ENCODE measurements at regions of chr17 and their contacts with region 1.

Region 1: GRCh38 chr17:7862692-7863437 is 5.1 kb downstream of the CYB5D1 start:
- DNase-seq: peak; percentile 60
- ATAC-seq: no peak
- H3K4me3 ChIP-seq: no peak overlapping the region
- H3K27ac ChIP-seq: no peak overlapping the region
- H3K4me1 ChIP-seq: peaks cover 11% of the 10 kb centered on the region; the same call in 1 of the 2 replicates
- H3K27me3 ChIP-seq: no peaks in the 10 kb centered on the region
- CTCF ChIP-seq: peak; percentile 68

Region 2: GRCh38 chr17:7056386-7056785 is 806.5 kb before region 1 on chr17:
- CTCF ChIA-PET with region 1: no interaction called
- POLR2A ChIA-PET with region 1: no interaction called
- intact Hi-C with region 1: no loop called
- DNase-seq: peak; percentile 46
- ATAC-seq: no peak
- H3K4me3 ChIP-seq: no peak overlapping the region
- H3K27ac ChIP-seq: no peak overlapping the region
- H3K4me1 ChIP-seq: peaks cover 27% of the 10 kb centered on the region
- H3K27me3 ChIP-seq: no peaks in the 10 kb centered on the region
- CTCF ChIP-seq: no peak

Region 3: GRCh38 chr17:7834962-7835813 is 27.7 kb before region 1 on chr17:
- CTCF ChIA-PET with region 1: no interaction called
- POLR2A ChIA-PET with region 1: no interaction called
- intact Hi-C with region 1: no loop called
- DNase-seq: peak; percentile 97
- ATAC-seq: peak; percentile 56
- H3K4me3 ChIP-seq: peak overlapping the region; percentile 83
- H3K27ac ChIP-seq: peak overlapping the region; percentile 75
- H3K4me1 ChIP-seq: peaks cover 27% of the 10 kb centered on the region
- H3K27me3 ChIP-seq: no peaks in the 10 kb centered on the region
- CTCF ChIP-seq: peak; percentile 71

Region 4: DNA sequence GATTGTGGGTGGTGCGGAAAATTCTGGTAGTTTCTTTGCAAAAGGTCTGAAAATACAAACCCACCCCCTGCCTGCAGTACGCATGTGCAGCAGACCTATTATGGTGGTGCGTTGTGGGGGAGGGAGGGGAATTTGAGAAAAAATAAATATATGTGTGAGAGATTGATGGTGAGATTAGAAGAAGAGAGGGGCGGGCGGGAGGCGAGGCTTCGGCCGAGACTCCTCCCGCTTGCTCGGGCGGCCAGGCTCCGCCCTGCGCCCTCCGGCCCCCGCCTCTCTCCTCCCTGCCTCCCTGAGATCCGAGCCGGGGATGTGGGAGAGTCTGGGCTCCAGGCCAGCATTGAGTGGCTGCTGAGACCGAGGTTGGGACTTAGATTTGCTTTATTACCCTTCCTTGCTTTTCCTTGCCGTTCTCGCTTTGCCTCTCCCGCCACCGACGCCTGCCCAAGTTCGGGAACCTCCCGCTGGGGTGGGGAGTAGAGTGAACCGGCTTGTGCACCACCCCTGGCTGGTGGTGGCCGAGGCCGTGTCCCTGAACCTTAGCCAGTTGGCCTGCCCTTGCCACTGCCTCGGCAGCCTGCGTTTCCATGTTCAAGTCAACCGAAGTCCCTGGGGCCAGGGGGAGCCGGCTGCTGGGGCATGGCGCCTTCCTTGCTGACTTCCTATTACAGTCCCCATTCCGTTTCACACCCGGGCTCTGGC is 24.8 kb after region 1 on chr17:
- CTCF ChIA-PET with region 1: no interaction called
- POLR2A ChIA-PET with region 1: no interaction called
- intact Hi-C with region 1: loop called (anchors 2 kb)
- DNase-seq: peak; percentile 93
- ATAC-seq: peak; percentile 75
- H3K4me3 ChIP-seq: peak overlapping the region; percentile 94
- H3K27ac ChIP-seq: peak overlapping the region; percentile 96
- H3K4me1 ChIP-seq: peaks cover 29% of the 10 kb centered on the region
- H3K27me3 ChIP-seq: no peaks in the 10 kb centered on the region
- CTCF ChIP-seq: no peak

Region 5: DNA sequence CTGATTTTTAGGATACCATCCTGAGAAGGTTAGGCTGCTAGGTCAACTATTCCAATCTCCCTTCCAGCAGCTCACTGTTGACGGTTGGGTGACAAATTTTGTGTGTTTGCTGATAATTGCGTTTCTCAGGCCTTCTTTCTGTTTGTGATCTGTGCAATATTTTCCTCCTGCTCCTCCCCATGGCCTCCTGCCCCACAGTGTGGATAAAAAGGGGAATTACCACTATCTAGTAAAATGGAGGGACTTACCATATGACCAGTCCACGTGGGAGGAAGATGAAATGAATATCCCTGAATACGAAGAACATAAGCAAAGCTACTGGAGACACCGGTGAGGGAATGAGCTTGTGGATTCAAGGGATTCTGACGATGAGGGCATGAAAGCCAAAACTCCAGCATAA is 34.9 kb after region 1 on chr17:
- CTCF ChIA-PET with region 1: no interaction called
- POLR2A ChIA-PET with region 1: no interaction called
- intact Hi-C with region 1: loop called (anchors 1 kb)
- DNase-seq: peak; percentile 21
- ATAC-seq: 0 out of 2 replicates have a peak, but pooled peaks have one; percentile 24
- H3K4me3 ChIP-seq: no peak overlapping the region
- H3K27ac ChIP-seq: no peak overlapping the region
- H3K4me1 ChIP-seq: no peaks in the 10 kb centered on the region
- H3K27me3 ChIP-seq: no peaks in the 10 kb centered on the region
- CTCF ChIP-seq: peak; percentile 53

Region 6: GRCh38 chr17:7989781-7990655 is 127.2 kb after region 1 on chr17:
- CTCF ChIA-PET with region 1: no interaction called
- POLR2A ChIA-PET with region 1: no interaction called
- intact Hi-C with region 1: loop called (anchors 2 kb)
- DNase-seq: peak; percentile 80
- ATAC-seq: peak; percentile 85
- H3K4me3 ChIP-seq: peak overlapping the region; percentile 81
- H3K27ac ChIP-seq: peak overlapping the region; percentile 8; the same call in 1 of the 2 replicates
- H3K4me1 ChIP-seq: peaks cover 7% of the 10 kb centered on the region; the same call in 1 of the 2 replicates
- H3K27me3 ChIP-seq: no peaks in the 10 kb centered on the region
- CTCF ChIP-seq: peak; percentile 82

Measured in PC-3 (cell line).